Right ventricle myocardium inferior (tissue), 1 donor: ENCODE measurements at regions of chr18 and their contacts with region 1.

Region 1: DNA sequence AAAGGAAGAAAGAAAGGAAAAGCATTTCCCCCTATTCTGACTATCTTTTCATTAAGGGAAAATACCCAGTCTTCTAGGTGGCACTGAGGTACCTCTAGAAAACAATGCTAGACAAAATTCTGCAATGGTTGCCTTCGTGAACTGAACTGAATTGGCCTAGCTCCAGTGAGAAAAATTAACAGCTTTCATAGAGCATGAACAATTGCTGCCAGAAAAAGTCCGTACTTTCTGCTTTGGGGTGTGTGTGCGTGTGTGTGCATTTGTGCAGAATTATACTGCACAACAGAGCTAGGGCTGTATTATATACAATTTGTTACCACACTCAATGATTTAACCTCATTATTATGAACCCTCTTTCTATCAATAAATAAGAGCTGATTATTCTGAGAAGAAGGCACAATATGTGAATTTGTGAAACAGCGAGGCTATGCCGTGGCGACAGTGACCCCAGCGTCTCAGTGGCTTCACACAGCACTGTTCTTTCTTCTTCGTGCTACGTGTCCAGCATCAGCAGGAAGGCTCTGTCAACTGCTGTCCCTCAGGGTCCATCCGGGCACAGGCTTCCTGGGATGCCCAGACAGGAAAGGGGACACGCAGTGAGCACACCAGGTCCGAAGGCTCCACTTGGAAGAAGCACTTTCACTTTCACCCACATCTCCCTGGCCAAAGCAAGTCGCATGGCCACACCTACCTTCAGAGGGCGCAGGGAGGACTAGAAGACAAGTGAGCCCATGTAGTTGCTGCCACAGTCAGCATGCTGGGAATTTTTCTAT is 47.5 kb downstream of the PTGR3 start:
- DNase-seq: no peak
- ATAC-seq: peak; percentile 54

Region 2: DNA sequence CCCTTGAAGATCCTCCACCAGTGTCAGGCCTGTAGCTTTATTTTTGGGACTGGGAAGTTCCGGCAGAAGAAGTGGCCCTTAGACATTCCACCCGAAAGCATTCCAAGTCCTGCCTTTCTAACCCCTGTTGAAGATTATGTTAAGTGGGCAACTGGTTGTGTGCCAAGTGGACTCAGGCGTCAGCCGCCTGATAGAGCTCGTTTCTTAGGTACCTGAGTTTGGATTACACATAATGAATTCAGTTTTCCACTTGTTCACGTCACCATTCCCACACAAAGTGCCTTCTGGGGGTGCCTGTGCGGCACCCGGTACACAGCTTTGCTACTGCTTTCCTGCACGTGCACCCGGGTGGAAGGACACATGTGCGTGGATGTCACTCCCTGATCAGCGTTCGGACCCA is 109.0 kb before region 1 on chr18:
- intact Hi-C with region 1: loop called (anchors 5 kb)
- DNase-seq: no peak
- ATAC-seq: peak; percentile 73

Region 3: DNA sequence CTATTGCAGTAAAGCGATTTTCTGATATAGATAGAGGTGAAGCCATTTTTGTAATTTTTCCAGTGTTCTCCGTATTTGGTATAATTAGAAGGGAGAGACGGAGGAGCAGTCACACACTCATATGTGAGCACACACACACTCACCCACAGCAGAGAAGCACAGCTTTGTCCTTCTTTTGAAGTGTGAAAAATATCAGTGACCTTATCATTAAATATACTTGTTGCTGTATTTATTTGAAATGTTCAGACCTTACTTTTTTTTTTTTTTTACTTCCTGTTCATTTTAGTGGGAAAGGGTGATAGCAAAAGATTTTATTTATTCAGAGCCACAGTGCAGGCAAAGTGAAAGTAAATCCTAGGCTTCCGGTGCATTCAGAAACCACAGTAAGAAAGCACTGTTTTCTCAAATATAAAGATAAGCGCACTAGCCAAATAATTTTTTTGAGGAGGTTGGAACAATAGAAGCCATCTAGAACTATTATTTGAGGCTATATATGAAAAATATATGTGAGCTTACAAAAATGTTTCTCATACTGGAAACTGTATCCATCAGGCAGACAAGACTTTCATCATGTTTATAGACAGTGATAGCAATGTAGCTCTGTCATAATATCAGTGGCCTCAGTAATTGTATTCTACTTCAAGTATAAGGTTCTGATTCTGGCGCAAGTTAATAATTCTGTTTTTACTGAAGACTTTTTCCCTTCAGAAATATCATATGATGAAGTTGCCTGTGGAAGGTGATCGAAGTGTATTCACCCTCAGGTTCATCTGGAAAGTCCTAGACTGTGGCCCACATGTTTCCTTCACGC is 86.4 kb after region 1 on chr18:
- intact Hi-C with region 1: loop called (anchors 10 kb)
- DNase-seq: no peak
- ATAC-seq: peak; percentile 51

Region 4: GRCh38 chr18:75478996-75479880 is 317.8 kb after region 1 on chr18:
- intact Hi-C with region 1: loop called (anchors 10 kb)
- DNase-seq: no peak
- ATAC-seq: peak; percentile 68